ENCODE measurements at regions of chr20 and their contacts with region 1.

Region 1: GRCh38 chr20:49132995-49133478 is 55.1 kb downstream of the STAU1 start:
- DNase-seq: peak; percentile 84
- H3K4me3 ChIP-seq: no peak overlapping the region
- H3K27ac ChIP-seq: no peak overlapping the region
- H3K4me1 ChIP-seq: no peaks in the 10 kb centered on the region
- H3K27me3 ChIP-seq: no peaks in the 10 kb centered on the region

Region 2: DNA sequence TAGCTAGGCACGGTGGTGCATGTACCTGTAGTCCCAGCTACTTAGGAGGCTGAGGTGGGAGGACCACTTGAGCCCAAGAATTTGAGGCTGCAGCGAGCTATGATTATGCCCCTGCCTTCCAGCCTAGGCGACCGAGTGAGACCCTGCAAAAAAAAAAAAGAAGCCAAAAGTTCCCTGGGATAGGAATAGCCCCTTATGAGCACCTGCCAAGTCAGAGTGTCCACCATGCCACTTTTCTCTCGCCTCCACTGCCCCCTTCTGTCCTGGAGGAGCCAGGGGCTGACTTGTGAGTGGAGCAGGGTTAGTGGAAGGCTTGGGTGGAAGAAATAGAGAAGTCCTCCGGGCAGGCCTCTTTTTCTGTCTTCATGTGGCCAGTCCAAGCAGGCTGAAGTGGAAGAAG is 74.0 kb after region 1 on chr20:
- in situ Hi-C with region 1: loop called (anchors 10 kb)
- DNase-seq: no peak
- H3K4me3 ChIP-seq: no peak overlapping the region
- H3K27ac ChIP-seq: no peak overlapping the region
- H3K4me1 ChIP-seq: no peaks in the 10 kb centered on the region
- H3K27me3 ChIP-seq: no peaks in the 10 kb centered on the region